HepG2 (cell line): ENCODE measurements at regions of chrX and their contacts with region 1.

Region 1: DNA sequence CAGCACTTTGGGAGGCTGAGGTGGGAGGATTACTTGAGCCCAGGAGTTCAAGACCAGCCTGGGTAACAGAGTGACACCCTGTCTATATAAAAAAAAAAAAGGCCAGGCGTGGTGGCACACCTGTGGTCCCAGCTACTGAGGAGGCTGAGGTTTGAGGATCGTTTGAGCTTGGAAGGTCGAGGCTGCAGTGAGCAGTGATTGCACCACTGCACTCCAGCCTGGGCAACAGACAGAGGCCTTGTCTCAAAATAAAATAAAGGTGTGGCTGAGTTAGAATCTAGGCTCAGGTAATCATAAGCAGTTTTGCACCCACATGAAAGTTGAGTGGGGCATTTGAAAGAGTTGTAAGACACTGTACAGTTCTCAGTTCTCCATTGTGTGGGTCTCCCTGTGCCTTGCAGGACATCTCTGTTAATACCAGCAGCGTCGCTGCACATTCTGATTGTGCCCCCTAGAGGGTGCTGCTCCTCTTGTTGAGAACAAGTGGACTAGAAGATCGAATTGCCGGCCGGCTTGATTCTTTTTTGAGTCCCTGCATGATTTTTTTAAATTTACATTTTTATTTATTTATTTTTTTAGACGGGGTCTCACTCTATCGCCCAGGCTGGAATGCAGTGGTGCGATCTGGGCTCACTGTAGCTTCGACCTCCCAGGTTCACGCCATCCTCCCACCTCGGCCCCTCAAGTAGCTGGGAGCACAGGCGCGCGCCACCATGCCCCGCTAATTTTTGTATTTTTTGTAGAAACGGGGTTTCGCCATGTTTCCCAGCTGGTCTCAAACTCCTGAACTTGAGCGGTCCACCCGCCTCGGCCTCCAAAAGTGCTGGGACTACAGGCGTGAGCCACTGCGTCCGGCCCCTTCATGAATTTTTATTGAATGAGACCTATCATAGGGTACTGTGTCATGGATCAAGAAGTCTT is 73.6 kb upstream of the RBMX start:
- DNase-seq: peak; percentile 65
- ATAC-seq: peak; percentile 88
- H3K4me3 ChIP-seq: no peak overlapping the region
- H3K27ac ChIP-seq: no peak overlapping the region
- H3K4me1 ChIP-seq: no peaks in the 10 kb centered on the region
- H3K27me3 ChIP-seq: no peaks in the 10 kb centered on the region
- CTCF ChIP-seq: peak; percentile 62
- EP300 ChIP-seq: no peak
- POLR2A ChIP-seq: no peak
- RAD21 ChIP-seq: no peak

Region 2: DNA sequence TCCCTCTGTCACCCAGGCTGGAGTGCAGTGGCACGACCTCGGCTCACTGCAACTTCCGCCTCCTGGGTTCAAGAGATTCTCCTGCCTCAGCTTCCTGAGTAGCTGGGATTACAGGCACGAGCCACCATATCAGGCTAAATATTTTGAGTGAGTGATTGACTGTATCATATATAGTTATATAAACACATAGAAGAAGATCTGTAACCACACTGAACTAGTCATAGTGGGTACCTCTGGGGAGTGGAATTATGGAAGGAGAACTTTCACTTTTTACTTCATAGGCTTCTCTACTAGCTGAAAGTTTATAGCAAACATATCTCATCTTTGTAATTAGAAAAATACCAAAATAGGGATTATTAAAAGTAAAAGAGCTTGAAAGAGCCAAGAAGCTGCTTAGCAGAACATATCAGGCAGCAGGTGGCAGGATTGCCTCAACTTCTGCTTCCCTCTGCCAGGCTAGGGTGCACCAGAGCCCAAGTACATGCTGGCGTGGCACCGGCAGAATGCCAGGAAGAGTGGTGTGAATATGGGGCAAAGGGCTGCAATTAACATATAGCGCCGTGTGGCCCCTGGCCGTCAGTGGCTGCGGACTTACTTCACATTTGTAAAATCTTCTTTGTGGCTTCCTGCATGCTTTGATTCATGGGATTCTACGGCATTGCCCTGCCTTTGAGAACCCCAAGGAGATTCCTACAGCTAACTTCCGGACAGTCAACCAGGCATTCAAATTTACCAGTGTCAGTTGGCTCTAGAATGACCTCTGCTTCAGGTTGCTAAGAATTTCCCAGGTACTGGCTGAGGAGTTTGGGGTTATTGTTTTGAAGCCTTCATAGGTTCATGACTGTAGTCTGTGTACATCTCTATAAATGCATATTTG is 345.6 kb before region 1 on chrX:
- CTCF ChIA-PET with region 1: no interaction called
- POLR2A ChIA-PET with region 1: no interaction called
- in situ Hi-C with region 1: no loop called
- intact Hi-C with region 1: no loop called
- DNase-seq: no peak
- ATAC-seq: no peak
- H3K4me3 ChIP-seq: no peak overlapping the region
- H3K27ac ChIP-seq: no peak overlapping the region
- H3K4me1 ChIP-seq: no peaks in the 10 kb centered on the region
- H3K27me3 ChIP-seq: no peaks in the 10 kb centered on the region
- CTCF ChIP-seq: no peak
- EP300 ChIP-seq: no peak
- POLR2A ChIP-seq: no peak
- RAD21 ChIP-seq: no peak

Region 3: DNA sequence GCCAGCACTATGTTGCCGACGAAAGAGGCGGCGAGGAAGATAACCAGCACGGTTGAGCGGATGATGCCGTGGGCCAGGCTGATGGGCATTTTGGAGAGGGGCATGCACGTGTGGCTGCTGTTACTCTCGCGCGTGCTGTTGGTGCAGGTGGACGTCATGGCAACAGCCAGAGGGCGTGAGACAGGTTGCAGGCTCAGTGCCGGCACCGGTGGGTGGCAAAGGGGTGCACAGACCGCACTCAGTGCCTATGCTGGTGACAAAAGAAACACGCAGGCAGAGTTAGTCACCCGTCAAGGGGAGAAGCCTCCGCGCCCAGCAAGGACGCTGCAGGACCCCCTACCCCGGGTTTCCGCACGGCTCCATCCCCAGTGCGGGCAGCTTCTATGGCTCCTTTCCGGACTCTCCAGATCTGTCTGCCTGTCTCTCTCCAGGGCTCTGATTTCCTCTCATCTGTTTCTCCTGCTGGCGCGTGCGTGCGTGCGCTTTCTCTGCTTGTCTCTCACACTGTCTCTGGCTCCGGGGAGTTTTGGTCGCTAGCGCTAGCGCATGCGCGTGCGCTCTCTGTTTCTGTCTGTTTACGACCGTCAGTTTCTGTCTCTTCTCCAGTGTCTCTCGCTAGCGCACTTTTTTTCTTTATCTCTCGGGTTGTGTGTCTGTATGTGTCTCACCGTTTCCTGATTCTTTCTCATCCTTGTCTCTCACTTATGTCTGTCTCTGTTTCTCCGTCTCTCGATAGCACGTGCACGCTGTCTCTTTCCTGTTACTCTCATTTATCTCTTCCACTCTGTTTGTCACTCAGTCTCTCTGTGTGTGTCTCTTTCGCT is 77.6 kb after region 1 on chrX:
- CTCF ChIA-PET with region 1: no interaction called
- POLR2A ChIA-PET with region 1: no interaction called
- in situ Hi-C with region 1: no loop called
- intact Hi-C with region 1: loop called (anchors 5 kb)
- DNase-seq: no peak
- ATAC-seq: no peak
- H3K4me3 ChIP-seq: no peak overlapping the region
- H3K27ac ChIP-seq: no peak overlapping the region
- H3K4me1 ChIP-seq: no peaks in the 10 kb centered on the region
- H3K27me3 ChIP-seq: no peaks in the 10 kb centered on the region; a peak in 1 of 5 replicates
- CTCF ChIP-seq: no peak
- EP300 ChIP-seq: no peak
- POLR2A ChIP-seq: no peak
- RAD21 ChIP-seq: no peak

Region 4: GRCh38 chrX:137051978-137052642 is 98.0 kb after region 1 on chrX:
- CTCF ChIA-PET with region 1: interaction called, 30 read pairs
- POLR2A ChIA-PET with region 1: no interaction called
- in situ Hi-C with region 1: loop called (anchors 5 kb)
- intact Hi-C with region 1: loop called (anchors 1 kb)
- DNase-seq: peak; percentile 21
- ATAC-seq: peak; percentile 98
- H3K4me3 ChIP-seq: peak overlapping the region in 1 of 3 experiments; percentile 43; a peak in 1 of 6 replicates
- H3K27ac ChIP-seq: no peak overlapping the region
- H3K4me1 ChIP-seq: no peaks in the 10 kb centered on the region
- H3K27me3 ChIP-seq: peaks cover 1 to 17% of the 10 kb centered on the region in 2 experiments; a peak in 3 of 5 replicates
- CTCF ChIP-seq: peak; percentile 85
- EP300 ChIP-seq: no peak
- POLR2A ChIP-seq: no peak
- RAD21 ChIP-seq: peak; percentile 64

Region 5: GRCh38 chrX:137194164-137194563 is 240.0 kb after region 1 on chrX:
- CTCF ChIA-PET with region 1: interaction called, 9 read pairs
- POLR2A ChIA-PET with region 1: no interaction called
- in situ Hi-C with region 1: loop called (anchors 10 kb)
- intact Hi-C with region 1: loop called (anchors 2 kb)
- DNase-seq: peak; percentile 12
- ATAC-seq: peak; percentile 71
- H3K4me3 ChIP-seq: no peak overlapping the region
- H3K27ac ChIP-seq: no peak overlapping the region
- H3K4me1 ChIP-seq: no peaks in the 10 kb centered on the region
- H3K27me3 ChIP-seq: no peaks in the 10 kb centered on the region
- CTCF ChIP-seq: peak; percentile 44
- EP300 ChIP-seq: no peak
- POLR2A ChIP-seq: no peak
- RAD21 ChIP-seq: no peak